ENCODE measurements at regions of chr6 and their contacts with region 1.

Region 1: GRCh38 chr6:6901205-6901731 is 206.5 kb upstream of the RREB1 start:
- DNase-seq: no peak
- ATAC-seq: peak in 1 of 2 donors; percentile 11
- H3K4me3 ChIP-seq: no peak overlapping the region
- H3K27ac ChIP-seq: no peak overlapping the region
- H3K4me1 ChIP-seq: no peaks in the 10 kb centered on the region
- H3K27me3 ChIP-seq: no peaks in the 10 kb centered on the region

Region 2: GRCh38 chr6:6676910-6677441 is 224.3 kb before region 1 on chr6:
- intact Hi-C with region 1: loop called in 1 of 4 experiments (anchors 10 kb)
- DNase-seq: peak; percentile 65 to 85 (median 76)
- ATAC-seq: peak; percentile 76 to 90
- H3K4me3 ChIP-seq: no peak overlapping the region
- H3K27ac ChIP-seq: peak overlapping the region; percentile 90
- H3K4me1 ChIP-seq: peaks cover 3% of the 10 kb centered on the region
- H3K27me3 ChIP-seq: no peaks in the 10 kb centered on the region

Region 3: GRCh38 chr6:7140631-7141378 is 239.5 kb after region 1 on chr6:
- intact Hi-C with region 1: no loop called
- DNase-seq: peak; percentile 90 to 96 (median 96)
- ATAC-seq: peak; percentile 97 to 98
- H3K4me3 ChIP-seq: peak overlapping the region; percentile 73
- H3K27ac ChIP-seq: peak overlapping the region; percentile 99
- H3K4me1 ChIP-seq: peaks cover 12% of the 10 kb centered on the region
- H3K27me3 ChIP-seq: no peaks in the 10 kb centered on the region

Measured in right cardiac atrium (tissue), 5 donors.